CD14-positive monocyte (primary cell): ENCODE measurements at regions of chr21 and their contacts with region 1.

Region 1: DNA sequence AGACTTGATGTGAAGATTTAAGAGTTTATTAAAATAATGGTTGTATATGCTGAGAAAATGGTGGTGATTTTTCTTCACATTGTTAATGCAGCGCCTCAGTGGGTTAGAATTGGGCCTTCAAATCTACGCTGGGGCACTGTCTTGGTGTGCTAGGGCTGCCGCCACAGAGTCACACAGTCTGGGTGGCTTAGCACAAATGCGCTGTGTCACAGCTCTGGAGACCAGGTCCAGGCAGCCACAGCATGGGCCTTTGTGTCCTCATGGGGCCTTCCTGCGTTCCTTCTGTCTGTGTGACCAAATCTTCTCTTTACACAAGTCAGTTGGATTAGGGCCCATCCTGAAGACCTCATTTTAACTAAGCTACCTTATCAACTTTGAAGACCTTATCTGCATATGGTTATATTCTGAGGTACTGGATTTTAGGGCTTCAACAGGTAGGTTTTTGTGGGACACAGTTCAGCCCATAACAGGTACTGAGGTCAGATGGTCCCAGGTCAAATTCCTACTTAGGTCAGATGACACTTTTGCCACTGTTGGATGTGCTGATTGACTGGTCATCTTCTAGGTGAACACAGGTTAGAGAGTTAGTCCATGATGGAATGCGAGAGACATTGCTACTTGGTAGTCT is 17.5 kb downstream of the TRAPPC10 start:
- DNase-seq: no peak
- H3K4me3 ChIP-seq: no peak overlapping the region
- H3K4me3 Mint-ChIP-seq: no peak overlapping the region
- H3K27ac ChIP-seq: peak overlapping the region in 1 of 2 donors; percentile 42
- H3K27ac Mint-ChIP-seq: peak overlapping the region in 1 of 7 donors; percentile 0
- H3K4me1 ChIP-seq: peaks cover 16 to 17% of the 10 kb centered on the region in 2 donors
- H3K4me1 Mint-ChIP-seq: peaks cover 23% of the 10 kb centered on the region
- H3K27me3 ChIP-seq: no peaks in the 10 kb centered on the region
- H3K27me3 Mint-ChIP-seq: peaks cover 0 to 2% (median 0%) of the 10 kb centered on the region in 3 donors
- CTCF ChIP-seq: no peak

Region 2: GRCh38 chr21:43991447-43991991 is 38.1 kb before region 1 on chr21:
- intact Hi-C with region 1: loop called in 1 of 2 experiments (anchors 5 kb)
- DNase-seq: no peak
- H3K4me3 ChIP-seq: no peak overlapping the region
- H3K4me3 Mint-ChIP-seq: no peak overlapping the region
- H3K27ac ChIP-seq: no peak overlapping the region
- H3K27ac Mint-ChIP-seq: peak overlapping the region in 1 of 7 donors; percentile 43
- H3K4me1 ChIP-seq: no peaks in the 10 kb centered on the region
- H3K4me1 Mint-ChIP-seq: no peaks in the 10 kb centered on the region
- H3K27me3 ChIP-seq: peaks cover 0 to 5% of the 10 kb centered on the region in 2 donors
- H3K27me3 Mint-ChIP-seq: peaks cover 7 to 15% (median 8%) of the 10 kb centered on the region in 3 donors
- CTCF ChIP-seq: no peak

Region 3: GRCh38 chr21:44653656-44654575 is 624.3 kb after region 1 on chr21:
- intact Hi-C with region 1: no loop called
- DNase-seq: no peak
- H3K4me3 ChIP-seq: no peak overlapping the region
- H3K4me3 Mint-ChIP-seq: no peak overlapping the region
- H3K27ac ChIP-seq: no peak overlapping the region
- H3K27ac Mint-ChIP-seq: no peak overlapping the region
- H3K4me1 ChIP-seq: no peaks in the 10 kb centered on the region
- H3K4me1 Mint-ChIP-seq: no peaks in the 10 kb centered on the region
- H3K27me3 ChIP-seq: no peaks in the 10 kb centered on the region
- H3K27me3 Mint-ChIP-seq: peaks cover 3 to 10% (median 9%) of the 10 kb centered on the region in 3 donors
- CTCF ChIP-seq: no peak